ENCODE measurements at regions of chr18 and their contacts with region 1.

Region 1: DNA sequence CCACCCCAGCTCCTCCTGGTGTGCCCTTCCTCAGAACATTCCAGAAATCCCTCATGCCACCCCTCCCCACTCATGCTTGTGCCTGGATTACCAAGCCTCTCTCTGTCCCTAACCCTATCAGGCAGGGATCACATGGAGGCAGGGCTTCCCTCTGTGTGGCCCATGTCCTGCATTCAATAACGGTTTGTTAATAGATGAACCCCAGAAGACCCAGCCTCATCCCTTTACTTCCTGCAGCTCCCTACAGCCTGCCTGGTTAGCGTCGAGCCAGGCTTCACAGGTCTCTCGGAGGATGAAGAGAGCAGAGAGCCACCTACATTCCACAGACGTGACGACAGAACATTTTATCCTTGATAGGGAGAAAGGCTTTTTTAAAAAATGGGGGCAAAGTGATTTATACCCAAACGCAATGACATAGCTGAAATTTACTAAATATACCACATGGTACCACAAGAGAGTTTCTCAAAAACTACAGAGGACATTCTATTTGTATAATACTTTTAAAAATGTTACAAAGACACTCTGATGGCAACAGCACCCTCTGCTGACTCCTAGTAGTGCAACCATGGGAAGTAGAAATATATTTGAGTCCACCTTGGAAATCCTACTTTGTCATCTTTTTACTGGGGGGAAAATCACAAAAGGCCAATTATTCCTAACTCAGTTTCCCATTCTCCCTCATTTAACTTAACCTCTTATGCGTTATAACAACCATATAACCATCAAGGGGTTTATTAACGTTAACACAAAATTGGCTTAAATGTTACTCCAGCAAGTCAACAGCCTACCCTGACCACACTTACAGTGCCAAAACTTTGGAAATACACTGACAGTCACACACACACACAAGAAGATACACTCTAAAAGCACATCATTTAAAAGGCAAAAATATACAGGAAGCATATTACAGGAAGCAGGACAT is 30.7 kb downstream of the FBXO15 start:
- DNase-seq: no peak
- H3K4me3 ChIP-seq: no peak overlapping the region
- H3K27ac ChIP-seq: no peak overlapping the region
- H3K4me1 ChIP-seq: no peaks in the 10 kb centered on the region
- H3K27me3 ChIP-seq: no peaks in the 10 kb centered on the region
- CTCF ChIP-seq: peak in 2 of 3 donors; percentile 18 to 23
- POLR2A ChIP-seq: no peak

Region 2: DNA sequence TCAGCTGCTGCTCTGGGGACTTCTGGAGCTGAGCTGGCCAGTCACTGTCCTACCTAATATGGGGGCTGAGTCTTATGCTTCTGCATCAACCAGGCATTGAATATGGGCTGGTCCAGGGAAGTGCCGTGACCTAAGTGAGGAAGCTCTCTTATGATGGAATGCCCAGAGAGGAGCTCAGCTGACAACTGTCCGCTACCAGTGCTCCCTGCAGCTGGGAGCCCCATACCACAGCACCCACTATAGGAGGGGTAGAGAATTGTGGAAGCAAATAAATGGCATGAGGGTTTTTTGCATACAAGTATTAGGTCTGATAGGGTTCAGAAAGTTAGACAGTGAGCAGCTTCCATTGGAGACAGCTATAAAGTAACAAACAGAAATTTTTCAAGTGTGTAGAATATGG is 36.0 kb after region 1 on chr18:
- intact Hi-C with region 1: no loop called
- DNase-seq: no peak
- H3K4me3 ChIP-seq: no peak overlapping the region
- H3K27ac ChIP-seq: no peak overlapping the region
- H3K4me1 ChIP-seq: peaks cover 0 to 5% of the 10 kb centered on the region in 2 donors
- H3K27me3 ChIP-seq: no peaks in the 10 kb centered on the region
- CTCF ChIP-seq: no peak
- POLR2A ChIP-seq: no peak

Region 3: GRCh38 chr18:75467281-75467795 is 1350.4 kb after region 1 on chr18:
- intact Hi-C with region 1: loop called (anchors 5 kb)
- DNase-seq: no peak
- H3K4me3 ChIP-seq: no peak overlapping the region
- H3K27ac ChIP-seq: no peak overlapping the region
- H3K4me1 ChIP-seq: no peaks in the 10 kb centered on the region
- H3K27me3 ChIP-seq: no peaks in the 10 kb centered on the region
- CTCF ChIP-seq: no peak
- POLR2A ChIP-seq: no peak

Measured in breast epithelium (tissue), 4 donors.